ENCODE measurements at regions of chr19 and their contacts with region 1.

Region 1: GRCh38 chr19:3499738-3500428 is 591 bp downstream of the DOHH start:
- DNase-seq: no peak
- H3K4me3 ChIP-seq: peak overlapping the region; percentile 81
- H3K27ac ChIP-seq: peak overlapping the region; percentile 100
- H3K4me1 ChIP-seq: peaks cover 3% of the 10 kb centered on the region
- H3K27me3 ChIP-seq: no peaks in the 10 kb centered on the region
- CTCF ChIP-seq: no peak

Region 2: DNA sequence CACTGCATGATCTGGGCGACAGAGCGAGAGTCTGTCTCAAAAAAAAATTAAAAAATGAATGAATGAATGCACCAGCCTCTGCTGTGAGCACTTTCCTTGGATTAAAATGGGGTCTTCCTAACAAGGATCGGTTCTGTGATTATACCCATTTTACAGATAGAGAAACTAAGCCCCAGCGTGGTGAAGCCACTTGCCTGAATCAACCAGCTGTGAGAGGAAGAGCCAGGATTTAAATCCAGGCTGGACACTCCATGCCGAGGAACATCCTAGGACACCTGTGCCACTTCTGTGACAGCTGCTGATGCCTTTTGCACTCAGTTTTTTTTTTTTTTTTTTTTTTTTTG is 451.7 kb before region 1 on chr19:
- CTCF ChIA-PET with region 1: interaction called, 11 read pairs
- POLR2A ChIA-PET with region 1: no interaction called
- intact Hi-C with region 1: no loop called
- DNase-seq: no peak
- H3K4me3 ChIP-seq: no peak overlapping the region
- H3K27ac ChIP-seq: peak overlapping the region; percentile 72
- H3K4me1 ChIP-seq: peaks cover 22% of the 10 kb centered on the region
- H3K27me3 ChIP-seq: no peaks in the 10 kb centered on the region
- CTCF ChIP-seq: no peak

Region 3: DNA sequence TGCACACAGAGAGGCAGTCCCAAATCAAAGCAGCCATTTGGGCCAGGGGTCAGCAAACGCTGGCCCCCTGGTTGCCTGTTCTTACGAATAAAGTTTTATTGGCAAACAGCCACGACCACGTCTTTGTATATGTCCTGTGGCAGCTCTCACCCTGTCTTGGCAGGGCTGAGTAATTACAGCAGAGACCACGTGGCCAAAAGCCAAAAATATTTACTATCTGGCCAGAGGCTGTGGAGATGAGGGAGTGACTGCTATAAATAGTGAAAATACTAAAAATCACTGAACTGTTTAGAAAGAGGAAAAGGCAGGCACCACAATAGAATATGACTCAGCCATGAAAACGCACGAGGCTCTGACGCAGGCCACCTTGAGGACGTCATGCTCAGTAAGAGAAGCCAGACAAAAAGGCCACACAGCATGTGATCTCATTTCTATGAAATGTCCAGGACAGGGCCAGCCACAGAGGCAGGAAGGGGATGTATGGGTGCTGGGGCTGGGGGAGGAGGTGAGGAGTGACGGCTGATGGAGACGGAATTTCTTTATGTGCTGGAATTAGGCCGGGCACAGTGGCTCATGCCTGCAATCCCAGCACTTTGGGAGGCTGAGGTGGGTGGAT is 49.0 kb before region 1 on chr19:
- CTCF ChIA-PET with region 1: no interaction called
- POLR2A ChIA-PET with region 1: no interaction called
- intact Hi-C with region 1: no loop called
- DNase-seq: peak; percentile 67
- H3K4me3 ChIP-seq: no peak overlapping the region
- H3K27ac ChIP-seq: no peak overlapping the region
- H3K4me1 ChIP-seq: no peaks in the 10 kb centered on the region
- H3K27me3 ChIP-seq: no peaks in the 10 kb centered on the region
- CTCF ChIP-seq: no peak

Region 4: DNA sequence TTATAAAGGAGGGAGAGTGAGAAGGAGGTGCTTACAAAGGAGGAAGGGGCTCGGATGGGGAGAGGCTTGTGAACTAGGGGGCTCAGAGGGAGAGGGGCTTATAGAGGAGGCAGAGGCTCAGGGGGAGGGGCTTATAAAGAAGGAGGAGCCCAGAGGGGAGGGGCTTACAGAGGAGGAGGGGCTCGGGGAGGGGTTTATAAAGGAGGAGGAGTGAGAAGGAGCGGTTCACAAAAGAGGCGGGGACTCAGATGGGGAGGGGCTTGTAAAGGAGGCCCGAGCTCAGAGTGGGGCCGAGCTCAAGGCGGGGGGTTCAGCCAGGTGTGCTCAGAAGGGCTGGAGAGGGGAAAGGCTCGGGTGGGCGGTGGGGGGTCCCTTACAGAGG is 20.1 kb before region 1 on chr19:
- CTCF ChIA-PET with region 1: interaction called, 11 read pairs
- POLR2A ChIA-PET with region 1: no interaction called
- intact Hi-C with region 1: no loop called
- DNase-seq: peak; percentile 43
- H3K4me3 ChIP-seq: no peak overlapping the region
- H3K27ac ChIP-seq: no peak overlapping the region
- H3K4me1 ChIP-seq: no peaks in the 10 kb centered on the region
- H3K27me3 ChIP-seq: peaks cover 40% of the 10 kb centered on the region
- CTCF ChIP-seq: no peak

Measured in A673 (cell line).